Adrenal gland (tissue), 19 donors: ENCODE measurements at regions of chr10 and their contacts with region 1.

Region 1: GRCh38 chr10:102064868-102065560 is at the start of gene HPS6:
- DNase-seq: peak; percentile 88 to 93 (median 90)
- H3K4me3 ChIP-seq: peak within 1 kb of the TSS; percentile 59 to 98 (median 88)
- H3K27ac ChIP-seq: peak within 1 kb of the TSS; percentile 74 to 95 (median 87)
- H3K4me1 ChIP-seq: peaks cover 11 to 15% of the 10 kb centered on the region in 2 donors
- H3K27me3 ChIP-seq: no peaks in the 10 kb centered on the region
- CTCF ChIP-seq: peak in 1 of 6 experiments; percentile 4
- POLR2A ChIP-seq: peak; percentile 78 to 82
- total RNA-seq, gene HPS6: 17.2 to 46.0 (median 25.1) TPM

Region 2: GRCh38 chr10:101830322-101831168 is 234.5 kb before region 1 on chr10:
- intact Hi-C with region 1: loop called (anchors 5 to 10 kb)
- DNase-seq: peak; percentile 95 to 97 (median 96)
- H3K4me3 ChIP-seq: peak overlapping the region in 2 of 4 donors; percentile 37 to 66
- H3K27ac ChIP-seq: peak overlapping the region; percentile 26 to 91 (median 49)
- H3K4me1 ChIP-seq: peaks cover 14 to 17% of the 10 kb centered on the region in 2 donors
- H3K27me3 ChIP-seq: no peaks in the 10 kb centered on the region
- CTCF ChIP-seq: no peak
- POLR2A ChIP-seq: peak in 1 of 2 donors; percentile 58

Region 3: GRCh38 chr10:101974091-101974971 is 90.7 kb before region 1 on chr10:
- intact Hi-C with region 1: no loop called
- DNase-seq: no peak
- H3K4me3 ChIP-seq: no peak overlapping the region
- H3K27ac ChIP-seq: peak overlapping the region in 3 of 5 donors; percentile 30 to 71 (median 58)
- H3K4me1 ChIP-seq: peaks cover 0 to 31% of the 10 kb centered on the region in 2 donors
- H3K27me3 ChIP-seq: no peaks in the 10 kb centered on the region
- CTCF ChIP-seq: no peak
- POLR2A ChIP-seq: no peak

Region 4: GRCh38 chr10:102175415-102175814 is 110.4 kb after region 1 on chr10:
- intact Hi-C with region 1: no loop called
- DNase-seq: no peak
- H3K4me3 ChIP-seq: no peak overlapping the region
- H3K27ac ChIP-seq: no peak overlapping the region
- H3K4me1 ChIP-seq: no peaks in the 10 kb centered on the region
- H3K27me3 ChIP-seq: no peaks in the 10 kb centered on the region
- CTCF ChIP-seq: no peak
- POLR2A ChIP-seq: no peak